ENCODE measurements at regions of chr15 and their contacts with region 1.

Region 1: GRCh38 chr15:86691091-86691663 is 611.5 kb downstream of the AGBL1 start:
- DNase-seq: no peak
- H3K4me3 ChIP-seq: no peak overlapping the region
- H3K27ac ChIP-seq: no peak overlapping the region
- H3K4me1 ChIP-seq: no peaks in the 10 kb centered on the region
- H3K27me3 ChIP-seq: no peaks in the 10 kb centered on the region
- CTCF ChIP-seq: peak in 1 of 3 experiments; percentile 27
- EP300 ChIP-seq: no peak
- POLR2A ChIP-seq: no peak

Region 2: GRCh38 chr15:86802244-86802643 is 111.1 kb after region 1 on chr15:
- intact Hi-C with region 1: loop called (anchors 10 kb)
- DNase-seq: no peak
- H3K4me3 ChIP-seq: no peak overlapping the region
- H3K27ac ChIP-seq: no peak overlapping the region
- H3K4me1 ChIP-seq: no peaks in the 10 kb centered on the region
- H3K27me3 ChIP-seq: no peaks in the 10 kb centered on the region
- CTCF ChIP-seq: no peak
- EP300 ChIP-seq: no peak
- POLR2A ChIP-seq: no peak